Left cardiac atrium (tissue), 4 donors: ENCODE measurements at regions of chr15 and their contacts with region 1.

Region 1: GRCh38 chr15:98421419-98422129 is 226.8 kb upstream of the IGF1R start:
- DNase-seq: peak; percentile 81
- ATAC-seq: peak; percentile 80 to 88

Region 2: DNA sequence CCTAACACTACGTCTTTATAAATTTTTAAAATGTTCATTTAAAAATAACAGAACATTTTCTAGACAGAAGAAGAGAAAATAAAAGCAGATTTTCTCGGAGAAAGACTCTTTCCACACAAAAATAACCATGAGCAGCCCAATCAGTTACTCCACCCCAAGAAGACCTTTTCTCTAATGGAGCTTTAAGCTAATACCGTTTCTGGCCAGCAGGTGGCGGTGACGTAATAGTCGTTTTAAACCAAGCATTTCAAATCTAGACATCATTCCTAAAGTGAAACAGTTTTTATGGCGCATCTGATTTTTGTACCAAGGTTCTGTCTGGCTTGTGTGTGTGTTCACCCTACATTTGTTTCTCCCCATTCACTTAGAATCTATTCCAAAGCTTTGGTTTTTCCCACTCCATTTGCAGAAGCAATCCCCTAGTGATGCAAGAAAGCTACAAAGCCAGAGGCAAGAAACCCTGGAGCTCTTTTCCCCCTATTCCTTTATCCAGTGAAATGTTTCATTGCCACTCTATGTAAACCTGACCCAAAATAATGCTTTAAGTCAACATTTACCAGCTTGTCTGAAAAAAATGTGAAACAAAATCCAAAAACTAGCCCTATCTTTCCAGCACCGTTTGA is 109.9 kb before region 1 on chr15:
- intact Hi-C with region 1: loop called (anchors 1 to 2 kb)
- DNase-seq: peak; percentile 80
- ATAC-seq: peak in 1 of 2 donors; percentile 40